ENCODE measurements at regions of chr10 and their contacts with region 1.

Region 1: GRCh38 chr10:73495884-73496674 is at the start of gene PPP3CB:
- DNase-seq: peak; percentile 74 to 95 (median 79)

Region 2: DNA sequence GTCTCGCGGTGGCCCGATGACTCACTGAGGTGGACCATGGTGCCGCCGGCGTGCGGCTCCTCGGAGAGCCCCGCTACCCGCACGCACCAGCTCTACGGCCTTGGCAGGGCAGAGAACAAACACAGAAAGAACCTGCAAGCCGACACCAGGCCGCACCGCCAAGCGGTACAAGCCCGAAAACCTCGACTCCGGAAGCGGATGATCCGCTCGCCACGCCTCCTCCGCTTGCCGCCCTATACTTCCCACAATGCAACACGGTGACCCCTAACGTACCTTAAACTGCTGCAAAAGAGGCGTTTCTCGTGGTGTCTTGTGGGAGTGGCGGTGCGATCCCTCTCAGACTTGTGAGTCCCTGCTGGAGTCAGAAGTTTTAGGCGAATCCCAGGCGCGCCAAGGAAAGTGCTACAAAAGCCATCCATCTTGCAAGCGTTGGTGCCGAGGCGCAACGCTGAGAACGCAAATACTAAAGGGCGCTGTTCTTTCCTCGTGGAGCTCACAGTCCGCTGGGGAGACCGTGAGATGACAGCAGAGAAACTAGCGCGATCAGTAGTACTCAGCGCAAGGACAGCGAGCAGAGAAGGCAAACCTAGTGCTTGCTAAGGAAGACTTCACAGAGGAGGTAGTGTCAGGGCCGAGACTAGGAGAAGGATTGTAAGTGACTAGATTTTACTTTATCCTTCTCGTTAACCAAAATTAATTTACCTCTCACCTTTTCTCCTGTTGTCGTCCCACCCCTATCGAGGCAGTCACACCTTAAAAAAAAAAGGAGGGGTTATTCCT is 243.4 kb before region 1 on chr10 and contains the start of gene MRPS16:
- intact Hi-C with region 1: loop called (anchors 10 kb)
- DNase-seq: peak; percentile 89 to 99 (median 94)

Region 3: GRCh38 chr10:73413528-73414229 is 82.4 kb before region 1 on chr10 and contains the start of gene ANXA7:
- intact Hi-C with region 1: loop called (anchors 5 kb)
- DNase-seq: peak; percentile 86 to 98 (median 94)

Region 4: GRCh38 chr10:73623056-73623455 is 127.0 kb after region 1 on chr10:
- intact Hi-C with region 1: no loop called
- DNase-seq: peak in 1 of 10 donors; percentile 64

Measured in posterior cingulate gyrus (tissue), 11 donors.